ENCODE measurements at regions of chr1 and their contacts with region 1.

Region 1: GRCh38 chr1:155001675-155002463 is 733 bp upstream of the ZBTB7B start:
- DNase-seq: peak; percentile 98
- H3K4me3 Mint-ChIP-seq: peak overlapping the region; percentile 97
- H3K27ac Mint-ChIP-seq: peak overlapping the region; percentile 97
- H3K4me1 Mint-ChIP-seq: peaks cover 47% of the 10 kb centered on the region
- H3K27me3 Mint-ChIP-seq: no peaks in the 10 kb centered on the region

Region 2: DNA sequence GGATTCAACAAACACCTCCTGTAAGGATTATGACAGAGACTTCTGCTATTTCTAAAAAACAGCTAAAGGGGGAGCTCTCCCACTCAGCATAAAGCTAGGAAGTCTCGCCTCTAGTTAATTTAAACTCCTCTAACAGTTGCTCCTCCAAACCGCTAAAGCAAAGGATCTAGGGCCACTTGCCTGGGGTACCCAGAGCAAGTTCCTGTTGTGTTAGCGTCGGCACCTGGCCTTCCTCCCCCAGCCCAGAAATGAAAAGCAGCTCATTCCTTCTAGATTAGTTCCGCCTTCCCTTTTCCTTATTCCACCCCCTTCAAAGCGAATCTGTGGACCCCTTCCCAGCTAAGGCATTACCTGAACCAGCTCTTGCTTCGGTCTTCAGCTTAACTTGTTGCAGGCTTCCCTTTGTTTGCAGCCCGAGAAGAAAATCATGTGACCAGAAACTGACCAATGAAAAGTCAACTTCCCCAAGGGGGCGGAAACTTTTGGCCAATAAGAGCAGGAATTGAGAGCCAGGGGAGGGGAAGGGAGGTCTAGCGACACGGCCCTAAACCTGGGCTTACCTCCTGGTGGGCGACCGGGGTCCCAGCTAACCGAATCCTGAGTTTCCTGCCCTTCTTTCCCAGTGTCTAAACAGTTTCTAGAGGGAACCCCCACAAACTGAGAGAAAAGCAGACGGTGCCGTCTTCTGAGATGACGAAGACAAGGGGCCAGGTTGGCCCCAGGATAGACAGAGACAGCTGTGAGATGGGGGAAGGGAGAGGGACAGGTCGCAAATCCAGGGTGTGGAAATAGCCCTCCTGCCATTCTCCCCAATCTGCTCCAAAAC is 45.9 kb before region 1 on chr1 and contains the start of gene PBXIP1:
- intact Hi-C with region 1: loop called (anchors 10 kb)
- DNase-seq: peak; percentile 86
- H3K4me3 Mint-ChIP-seq: peak within 1 kb of the TSS; percentile 95
- H3K27ac Mint-ChIP-seq: peak within 1 kb of the TSS; percentile 99
- H3K4me1 Mint-ChIP-seq: peaks cover 58% of the 10 kb centered on the region
- H3K27me3 Mint-ChIP-seq: no peaks in the 10 kb centered on the region
- total RNA-seq, gene PBXIP1: 23.6 and 25.3 TPM in 2 replicates

Region 3: DNA sequence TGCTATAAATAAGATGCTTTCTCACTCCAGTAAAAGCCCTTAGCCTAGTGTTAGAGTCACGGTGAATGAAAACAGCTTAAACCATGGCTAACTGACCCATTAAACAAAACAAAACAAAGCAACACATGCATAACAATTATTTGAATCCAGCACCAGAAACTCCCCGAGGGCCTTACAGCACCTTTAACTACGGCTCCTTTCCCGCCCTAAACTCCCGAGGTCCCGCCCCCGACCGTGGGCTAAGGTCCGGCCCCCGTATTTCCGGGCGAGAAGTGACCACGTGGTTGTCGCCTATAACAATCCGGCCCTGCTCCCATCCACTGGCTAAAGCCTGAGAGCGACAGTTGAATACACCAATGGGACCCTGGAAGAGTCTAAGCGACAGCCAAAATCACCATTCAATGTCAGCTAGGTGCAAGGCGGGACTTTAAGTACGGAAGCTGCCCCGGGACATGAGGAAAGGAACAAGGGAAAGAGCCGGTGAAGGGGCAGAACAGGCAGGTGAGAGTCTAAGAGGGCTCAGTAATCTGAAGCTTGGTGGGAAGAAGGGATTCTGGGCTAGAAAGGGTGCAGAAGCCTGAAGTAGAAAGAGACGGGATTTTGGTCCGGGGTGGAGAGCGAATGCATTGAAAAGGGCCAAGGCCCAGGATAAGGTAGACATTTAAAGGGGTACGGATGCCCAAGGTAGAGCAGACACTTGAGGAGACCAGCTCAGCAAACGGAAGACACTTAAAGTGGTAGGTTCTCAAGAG is 18.8 kb before region 1 on chr1 and contains the start of gene FLAD1:
- intact Hi-C with region 1: loop called (anchors 1 kb)
- DNase-seq: peak; percentile 97
- H3K4me3 Mint-ChIP-seq: no peak within 1 kb of the TSS
- H3K27ac Mint-ChIP-seq: no peak within 1 kb of the TSS
- H3K4me1 Mint-ChIP-seq: peaks cover 6% of the 10 kb centered on the region
- H3K27me3 Mint-ChIP-seq: no peaks in the 10 kb centered on the region
- total RNA-seq, gene FLAD1: 54.9 and 60.2 TPM in 2 replicates

Region 4: DNA sequence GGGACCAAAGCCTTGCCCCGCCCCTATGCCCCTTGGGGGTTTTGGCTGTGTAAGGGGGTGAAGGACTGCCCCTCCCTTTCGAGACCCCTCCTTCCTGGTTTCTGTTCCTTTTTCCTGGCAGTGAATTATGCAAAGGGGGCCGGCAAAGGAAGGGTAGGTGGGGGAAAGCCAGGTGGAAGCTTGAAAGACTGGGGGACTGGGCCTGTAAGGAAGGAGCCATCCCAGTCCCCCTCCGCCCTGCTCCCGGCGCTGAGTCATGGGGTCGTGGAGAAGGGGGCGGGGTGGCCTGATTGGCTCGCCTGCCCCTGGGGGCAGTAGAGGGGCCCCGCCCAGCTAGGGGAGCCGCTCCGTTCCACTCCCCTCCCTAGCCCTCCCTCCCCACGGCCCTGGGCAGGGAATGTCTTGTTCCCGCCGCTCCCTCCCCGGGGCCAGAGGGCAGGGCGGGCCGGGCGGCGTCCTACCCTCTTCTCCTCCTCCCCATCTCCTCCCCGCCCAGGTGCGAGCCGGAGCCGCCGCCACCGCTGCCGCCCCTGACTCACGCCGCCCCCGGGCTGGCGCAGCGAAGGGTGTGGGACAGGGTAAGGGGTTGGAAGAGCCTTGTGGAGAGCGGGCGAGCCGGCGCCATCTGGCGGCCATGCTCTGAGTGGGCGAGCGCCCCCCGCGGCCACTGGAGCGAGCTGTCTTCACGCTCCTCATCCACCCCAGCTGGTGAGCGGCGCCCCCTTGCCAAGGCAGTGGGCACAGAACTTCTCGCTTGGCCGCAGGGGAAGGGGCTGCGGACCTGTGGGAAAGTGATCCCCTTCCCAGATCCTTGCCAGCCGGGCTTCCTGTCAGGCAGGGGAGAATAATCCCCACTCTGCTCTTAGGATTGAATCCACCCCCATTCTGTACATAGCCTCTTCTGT is 15.4 kb after region 1 on chr1:
- intact Hi-C with region 1: loop called (anchors 1 kb)
- DNase-seq: peak; percentile 82
- H3K4me3 Mint-ChIP-seq: no peak overlapping the region
- H3K27ac Mint-ChIP-seq: peak overlapping the region; percentile 22
- H3K4me1 Mint-ChIP-seq: peaks cover 51% of the 10 kb centered on the region
- H3K27me3 Mint-ChIP-seq: no peaks in the 10 kb centered on the region

Region 5: DNA sequence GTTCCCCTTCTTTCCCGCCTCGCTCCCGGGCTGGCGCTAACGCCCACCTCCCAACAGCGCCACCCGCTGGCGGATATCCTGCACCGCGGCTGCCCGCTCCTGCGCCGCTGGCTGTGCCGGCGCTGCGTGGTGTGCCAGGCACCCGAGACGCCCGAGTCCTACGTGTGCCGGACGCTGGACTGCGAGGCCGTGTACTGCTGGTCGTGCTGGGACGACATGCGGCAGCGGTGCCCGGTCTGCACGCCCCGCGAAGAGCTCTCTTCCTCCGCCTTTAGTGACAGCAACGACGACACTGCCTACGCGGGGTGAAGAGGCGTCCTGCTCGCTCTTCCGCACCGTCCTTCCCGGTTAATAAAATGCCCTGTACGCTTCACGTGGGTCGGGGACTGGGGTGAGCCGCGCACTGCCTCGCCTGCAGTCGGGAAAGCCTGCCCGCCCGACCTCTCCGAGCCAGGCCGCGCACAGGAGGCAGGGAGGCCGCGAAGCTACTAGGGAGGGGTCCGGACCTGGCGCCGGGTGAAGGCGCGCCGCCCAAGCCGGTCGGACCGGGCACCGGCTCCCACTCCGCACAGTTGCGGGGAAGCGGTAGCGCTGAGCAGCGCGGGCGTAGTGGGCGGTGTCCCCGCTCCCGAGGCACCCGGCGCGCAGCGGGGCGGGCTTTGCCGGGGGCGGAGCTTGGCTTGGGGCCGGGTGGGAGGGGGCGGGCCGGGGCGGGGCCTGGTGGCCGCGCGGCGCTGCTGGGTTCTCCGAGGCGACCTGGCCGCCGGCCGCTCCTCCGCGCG is 48.9 kb after region 1 on chr1 and contains the start of gene ADAM15:
- intact Hi-C with region 1: no loop called
- DNase-seq: peak; percentile 75
- H3K4me3 Mint-ChIP-seq: peak within 1 kb of the TSS; percentile 84
- H3K27ac Mint-ChIP-seq: peak within 1 kb of the TSS; percentile 79
- H3K4me1 Mint-ChIP-seq: peaks cover 24% of the 10 kb centered on the region
- H3K27me3 Mint-ChIP-seq: no peaks in the 10 kb centered on the region
- total RNA-seq, gene ADAM15: 72.0 and 74.8 TPM in 2 replicates